Psoas muscle (tissue), 8 donors: ENCODE measurements at regions of chr9 and their contacts with region 1.

Region 1: DNA sequence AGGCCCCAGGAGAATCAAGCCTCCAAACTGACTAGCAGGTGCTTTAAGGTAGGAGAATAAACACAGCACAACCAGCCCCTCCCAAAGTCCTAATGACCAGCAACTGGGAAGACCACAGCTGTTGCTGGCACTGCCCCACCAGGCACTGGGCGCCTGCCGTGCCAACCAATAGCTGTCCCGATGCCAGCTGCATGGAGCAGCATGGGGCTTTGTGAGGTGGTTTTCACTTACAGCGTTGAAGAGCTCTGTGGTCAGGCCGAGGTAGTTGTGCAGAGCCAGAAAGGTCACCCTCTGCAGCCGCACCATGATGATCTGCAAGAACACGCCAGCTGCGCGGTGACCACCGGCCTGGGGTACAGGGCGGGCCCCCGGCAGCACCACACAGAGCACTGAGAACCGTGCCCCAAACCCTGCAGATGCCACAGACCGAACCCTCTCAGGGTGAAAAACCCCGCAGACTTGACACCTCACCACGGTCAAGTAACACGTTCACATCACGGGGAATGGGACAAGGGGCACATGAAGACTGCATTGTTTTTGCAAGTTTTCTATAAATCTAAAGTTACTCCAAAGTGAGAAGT is 28.7 kb downstream of the PNPLA7 start:
- DNase-seq: no peak
- ATAC-seq: peak in 3 of 4 donors; percentile 34 to 48 (median 41)
- H3K4me3 ChIP-seq: no peak overlapping the region
- H3K27ac ChIP-seq: no peak overlapping the region
- H3K4me1 ChIP-seq: peaks cover 4% of the 10 kb centered on the region
- H3K27me3 ChIP-seq: no peaks in the 10 kb centered on the region
- CTCF ChIP-seq: no peak

Region 2: GRCh38 chr9:137176302-137177182 is 345.0 kb before region 1 on chr9:
- intact Hi-C with region 1: no loop called
- DNase-seq: no peak
- ATAC-seq: peak in 3 of 4 donors; percentile 56 to 72 (median 61)
- H3K4me3 ChIP-seq: no peak overlapping the region
- H3K27ac ChIP-seq: no peak overlapping the region
- H3K4me1 ChIP-seq: no peaks in the 10 kb centered on the region
- H3K27me3 ChIP-seq: peaks cover 0 to under 1% (median 0%) of the 10 kb centered on the region in 3 donors
- CTCF ChIP-seq: peak; percentile 51

Region 3: DNA sequence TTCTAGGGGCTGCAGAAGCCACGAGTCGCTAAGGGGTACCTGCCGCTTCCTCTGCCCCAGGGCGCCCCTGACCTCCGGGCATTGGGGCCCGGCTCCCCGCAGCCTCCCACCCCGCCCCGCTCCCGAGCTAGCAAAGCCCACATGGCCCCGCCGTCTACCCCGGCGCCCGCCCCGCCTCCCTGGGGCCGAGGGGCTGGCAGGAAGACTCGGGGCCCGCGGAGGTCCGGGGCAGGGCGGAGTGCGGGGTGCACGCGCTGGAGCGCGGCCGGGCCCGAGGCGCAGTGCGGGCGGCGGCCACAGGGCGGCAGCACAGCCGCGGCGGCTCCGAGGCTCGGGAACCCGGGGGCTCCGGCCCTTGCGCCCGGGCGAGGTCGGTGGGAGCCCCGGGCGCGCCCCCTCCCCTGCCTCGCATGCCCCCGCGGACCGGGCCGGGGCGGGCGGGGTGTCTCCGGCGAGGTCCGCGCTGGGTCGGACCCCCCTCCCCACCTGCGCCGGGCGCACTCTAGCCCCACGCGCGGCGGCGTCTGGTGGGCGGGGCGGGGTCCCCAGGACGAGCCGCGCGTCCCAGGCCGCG is 226.2 kb before region 1 on chr9:
- intact Hi-C with region 1: loop called in 1 of 2 experiments (anchors 10 kb)
- DNase-seq: no peak
- ATAC-seq: peak; percentile 55 to 78 (median 73)
- H3K4me3 ChIP-seq: peak overlapping the region; percentile 59
- H3K27ac ChIP-seq: peak overlapping the region; percentile 58
- H3K4me1 ChIP-seq: peaks cover under 1% of the 10 kb centered on the region
- H3K27me3 ChIP-seq: peaks cover 0 to 74% (median 32%) of the 10 kb centered on the region in 3 donors
- CTCF ChIP-seq: peak; percentile 77

Region 4: GRCh38 chr9:137423004-137423874 is 98.3 kb before region 1 on chr9 and contains the starts of genes EXD3 and NOXA1:
- intact Hi-C with region 1: loop called in 1 of 2 experiments (anchors 5 kb)
- DNase-seq: peak; percentile 94 to 98
- ATAC-seq: peak; percentile 92 to 97 (median 96)
- H3K4me3 ChIP-seq: peak within 1 kb of the TSS; percentile 97
- H3K27ac ChIP-seq: peak within 1 kb of the TSS; percentile 83
- H3K4me1 ChIP-seq: peaks cover 24% of the 10 kb centered on the region
- H3K27me3 ChIP-seq: no peaks in the 10 kb centered on the region
- CTCF ChIP-seq: peak; percentile 72
- total RNA-seq, gene EXD3: 6.7 to 11.2 (median 9.7) TPM
- total RNA-seq, gene NOXA1: 0.62 to 5.1 (median 2.5) TPM